Astrocyte of the cerebellum (primary cell): ENCODE measurements at regions of chr9 and their contacts with region 1.

Region 1: GRCh38 chr9:130327070-130327780 is 61.7 kb downstream of the HMCN2 start:
- DNase-seq: no peak
- H3K4me3 ChIP-seq: no peak overlapping the region
- CTCF ChIP-seq: peak; percentile 16

Region 2: DNA sequence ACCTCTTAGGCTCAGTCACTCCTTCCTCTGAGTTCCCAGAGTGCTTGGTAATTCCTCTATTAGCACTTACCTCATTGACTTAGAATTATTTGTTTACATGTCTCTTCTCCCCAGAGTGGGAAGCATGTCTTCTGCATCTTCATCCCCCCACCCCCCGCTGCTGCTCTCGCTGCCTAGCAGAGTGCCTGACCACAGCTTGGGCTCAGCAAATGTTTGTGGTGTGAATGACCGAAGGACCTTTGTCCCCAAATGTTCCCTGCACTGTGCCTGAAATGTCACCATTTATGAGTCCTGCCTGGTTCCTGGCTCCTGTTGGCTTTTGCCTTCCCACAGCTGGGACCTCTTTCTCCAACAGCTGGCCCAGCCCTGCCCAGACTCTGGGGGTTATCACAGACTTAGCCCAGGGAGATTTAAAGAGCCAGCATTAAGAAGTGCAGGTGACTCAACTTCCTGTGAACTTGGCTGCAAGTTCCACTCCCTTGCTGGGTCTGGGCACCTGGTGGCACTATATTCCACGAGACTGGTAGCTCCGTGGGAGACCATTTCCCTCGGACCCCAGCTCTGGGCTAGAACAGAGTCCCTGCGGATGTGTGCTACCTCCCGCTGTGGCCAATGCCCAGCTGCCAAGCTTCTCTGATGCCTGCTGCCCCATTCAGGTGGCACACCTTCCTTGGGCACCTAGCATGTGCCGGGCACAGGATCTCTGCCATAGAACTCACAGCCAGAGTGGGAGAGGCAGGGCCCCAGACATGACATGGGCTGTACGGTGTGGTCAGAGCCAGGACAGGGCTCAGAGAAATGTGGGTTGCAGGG is 63.4 kb before region 1 on chr9:
- in situ Hi-C with region 1: loop called (anchors 5 kb)
- DNase-seq: no peak
- H3K4me3 ChIP-seq: no peak overlapping the region
- CTCF ChIP-seq: no peak